Naive thymus-derived CD4-positive, alpha-beta T cell (primary cell): ENCODE measurements at regions of chr4 and their contacts with region 1.

Region 1: GRCh38 chr4:108355186-108355901 is 186.6 kb upstream of the LEF1 start:
- DNase-seq: peak in 8 of 9 donors; percentile 28 to 92 (median 86)
- ATAC-seq: peak; percentile 90
- H3K4me3 ChIP-seq: peak overlapping the region; percentile 20
- H3K4me3 Mint-ChIP-seq: peak overlapping the region; percentile 57 to 87 (median 70)
- H3K27ac ChIP-seq: peak overlapping the region; percentile 86
- H3K27ac Mint-ChIP-seq: peak overlapping the region; percentile 76 to 99 (median 96)
- H3K4me1 ChIP-seq: peaks cover 17 to 59% of the 10 kb centered on the region in 2 donors
- H3K4me1 Mint-ChIP-seq: peaks cover 34 to 96% (median 83%) of the 10 kb centered on the region in 7 donors
- H3K27me3 ChIP-seq: no peaks in the 10 kb centered on the region
- H3K27me3 Mint-ChIP-seq: peaks cover 0 to 14% (median 0%) of the 10 kb centered on the region in 5 donors

Region 2: GRCh38 chr4:108512615-108513505 is 157.5 kb after region 1 on chr4:
- CTCF ChIA-PET with region 1: interaction called, 3 read pairs
- POLR2A ChIA-PET with region 1: no interaction called
- intact Hi-C with region 1: loop called in 1 of 2 experiments (anchors 1 kb)
- DNase-seq: peak in 7 of 9 donors; percentile 42 to 68 (median 58)
- ATAC-seq: peak; percentile 82
- H3K4me3 ChIP-seq: peak overlapping the region; percentile 6
- H3K4me3 Mint-ChIP-seq: peak overlapping the region; percentile 72 to 87 (median 80)
- H3K27ac ChIP-seq: no peak overlapping the region
- H3K27ac Mint-ChIP-seq: peak overlapping the region in 7 of 9 donors; percentile 33 to 79 (median 71)
- H3K4me1 ChIP-seq: peaks cover 0 to 10% of the 10 kb centered on the region in 2 donors
- H3K4me1 Mint-ChIP-seq: peaks cover 9 to 37% (median 23%) of the 10 kb centered on the region in 7 donors
- H3K27me3 ChIP-seq: no peaks in the 10 kb centered on the region
- H3K27me3 Mint-ChIP-seq: peaks cover 0 to 11% (median 0%) of the 10 kb centered on the region in 5 donors